HepG2 (cell line): ENCODE measurements at regions of chr7 and their contacts with region 1.

Region 1: GRCh38 chr7:485188-486081 is 34.2 kb downstream of the PDGFA start:
- DNase-seq: no peak
- ATAC-seq: peak; percentile 57
- H3K4me3 ChIP-seq: peak overlapping the region in 2 of 3 experiments; percentile 13 to 53; a peak in 2 of 6 replicates
- H3K27ac ChIP-seq: no peak overlapping the region
- H3K4me1 ChIP-seq: peaks cover 64% of the 10 kb centered on the region
- H3K27me3 ChIP-seq: peaks cover 2 to 10% of the 10 kb centered on the region in 2 experiments; a peak in 4 of 5 replicates
- CTCF ChIP-seq: 0 out of 2 replicates have a peak, but pooled peaks have one; percentile 6
- EP300 ChIP-seq: no peak
- POLR2A ChIP-seq: no peak
- RAD21 ChIP-seq: no peak

Region 2: GRCh38 chr7:435630-436366 is 49.6 kb before region 1 on chr7:
- CTCF ChIA-PET with region 1: no interaction called
- POLR2A ChIA-PET with region 1: no interaction called
- in situ Hi-C with region 1: no loop called
- intact Hi-C with region 1: loop called (anchors 10 kb)
- DNase-seq: no peak
- ATAC-seq: peak; percentile 45
- H3K4me3 ChIP-seq: peak overlapping the region; percentile 10 to 72 (median 56)
- H3K27ac ChIP-seq: no peak overlapping the region
- H3K4me1 ChIP-seq: peaks cover 49% of the 10 kb centered on the region
- H3K27me3 ChIP-seq: peaks cover 16 to 64% of the 10 kb centered on the region in 2 experiments
- CTCF ChIP-seq: 0 out of 2 replicates have a peak, but pooled peaks have one; percentile 4
- EP300 ChIP-seq: no peak
- POLR2A ChIP-seq: no peak
- RAD21 ChIP-seq: no peak